AG04449 (cell line): ENCODE measurements at regions of chr2 and their contacts with region 1.

Region 1: GRCh38 chr2:171574149-171574795 is 52.0 kb downstream of the CYBRD1 start:
- DNase-seq: no peak
- H3K4me3 ChIP-seq: no peak overlapping the region
- CTCF ChIP-seq: peak; percentile 96

Region 2: GRCh38 chr2:171553858-171554257 is 20.4 kb before region 1 on chr2:
- CTCF ChIA-PET with region 1: interaction called, 10 read pairs
- POLR2A ChIA-PET with region 1: no interaction called
- DNase-seq: no peak
- H3K4me3 ChIP-seq: no peak overlapping the region
- CTCF ChIP-seq: no peak

Region 3: GRCh38 chr2:171598713-171599319 is 24.5 kb after region 1 on chr2:
- CTCF ChIA-PET with region 1: interaction called, 18 read pairs
- POLR2A ChIA-PET with region 1: no interaction called
- DNase-seq: no peak
- H3K4me3 ChIP-seq: no peak overlapping the region
- CTCF ChIP-seq: peak; percentile 79

Region 4: GRCh38 chr2:171703574-171704347 is 129.5 kb after region 1 on chr2:
- CTCF ChIA-PET with region 1: interaction called, 58 read pairs
- POLR2A ChIA-PET with region 1: no interaction called
- DNase-seq: no peak
- H3K4me3 ChIP-seq: no peak overlapping the region
- CTCF ChIP-seq: peak; percentile 28

Region 5: DNA sequence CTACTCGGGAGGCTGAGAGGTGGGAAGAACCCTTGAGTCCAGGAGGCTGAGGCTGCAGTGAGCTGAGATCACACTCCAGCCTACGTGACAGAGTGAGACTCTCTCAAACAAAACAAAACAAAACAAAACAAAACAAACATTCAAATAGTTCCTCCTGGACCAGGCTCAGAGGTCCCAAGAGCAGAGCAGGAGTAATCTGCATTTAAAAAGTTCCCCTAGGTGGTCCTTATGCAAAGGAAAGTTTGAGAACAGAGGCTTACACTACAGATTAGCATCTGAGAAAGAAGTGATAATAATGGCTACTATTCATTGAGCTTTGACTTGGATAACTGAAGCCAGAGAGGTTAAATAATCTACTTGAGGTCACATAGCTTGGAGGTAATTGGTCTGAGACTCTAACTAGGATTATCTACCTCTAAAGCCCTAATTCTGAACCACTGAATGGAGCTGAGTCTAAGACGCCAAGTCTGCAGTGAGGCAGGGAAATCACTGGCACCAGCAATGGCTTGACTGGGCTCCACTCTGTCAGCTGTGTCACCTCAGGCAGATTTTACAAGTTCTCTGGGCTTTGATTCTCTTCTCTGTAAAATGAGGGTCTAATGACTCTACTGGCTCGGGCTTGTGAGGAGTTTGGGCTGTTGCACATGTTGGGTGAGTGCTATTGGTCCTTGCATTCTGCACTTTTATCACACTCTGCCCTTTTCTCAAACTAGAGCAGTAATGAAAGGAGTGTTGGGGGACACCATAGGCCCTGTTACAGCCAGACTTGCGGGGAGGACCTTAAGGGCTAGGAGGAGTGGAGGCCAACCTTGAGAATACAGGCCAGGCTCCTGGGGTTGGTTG is 557.7 kb after region 1 on chr2:
- CTCF ChIA-PET with region 1: interaction called, 14 read pairs
- POLR2A ChIA-PET with region 1: no interaction called
- DNase-seq: no peak
- H3K4me3 ChIP-seq: no peak overlapping the region
- CTCF ChIP-seq: no peak